AG04450 (cell line): ENCODE measurements at regions of chr21 and their contacts with region 1.

Region 1: GRCh38 chr21:29164325-29164942 is 34.0 kb downstream of the MAP3K7CL start:
- DNase-seq: no peak
- H3K4me3 ChIP-seq: no peak overlapping the region
- H3K27ac ChIP-seq: no peak overlapping the region
- H3K27me3 ChIP-seq: no peaks in the 10 kb centered on the region
- CTCF ChIP-seq: peak; percentile 85

Region 2: GRCh38 chr21:29145354-29145782 is 19.1 kb before region 1 on chr21:
- CTCF ChIA-PET with region 1: interaction called, 10 read pairs
- POLR2A ChIA-PET with region 1: no interaction called
- DNase-seq: peak; percentile 73
- H3K4me3 ChIP-seq: no peak overlapping the region
- H3K27ac ChIP-seq: peak overlapping the region; percentile 68
- H3K27me3 ChIP-seq: no peaks in the 10 kb centered on the region
- CTCF ChIP-seq: no peak

Region 3: GRCh38 chr21:29298348-29299045 is 134.1 kb after region 1 on chr21 and contains the start of gene BACH1:
- CTCF ChIA-PET with region 1: interaction called, 23 read pairs
- POLR2A ChIA-PET with region 1: interaction called, 4 read pairs
- DNase-seq: peak; percentile 84
- H3K4me3 ChIP-seq: peak within 1 kb of the TSS; percentile 97
- H3K27ac ChIP-seq: peak within 1 kb of the TSS; percentile 99
- H3K27me3 ChIP-seq: no peaks in the 10 kb centered on the region
- CTCF ChIP-seq: peak; percentile 24
- polyA plus RNA-seq, gene BACH1: 60.6 and 72.2 TPM in 2 replicates

Region 4: DNA sequence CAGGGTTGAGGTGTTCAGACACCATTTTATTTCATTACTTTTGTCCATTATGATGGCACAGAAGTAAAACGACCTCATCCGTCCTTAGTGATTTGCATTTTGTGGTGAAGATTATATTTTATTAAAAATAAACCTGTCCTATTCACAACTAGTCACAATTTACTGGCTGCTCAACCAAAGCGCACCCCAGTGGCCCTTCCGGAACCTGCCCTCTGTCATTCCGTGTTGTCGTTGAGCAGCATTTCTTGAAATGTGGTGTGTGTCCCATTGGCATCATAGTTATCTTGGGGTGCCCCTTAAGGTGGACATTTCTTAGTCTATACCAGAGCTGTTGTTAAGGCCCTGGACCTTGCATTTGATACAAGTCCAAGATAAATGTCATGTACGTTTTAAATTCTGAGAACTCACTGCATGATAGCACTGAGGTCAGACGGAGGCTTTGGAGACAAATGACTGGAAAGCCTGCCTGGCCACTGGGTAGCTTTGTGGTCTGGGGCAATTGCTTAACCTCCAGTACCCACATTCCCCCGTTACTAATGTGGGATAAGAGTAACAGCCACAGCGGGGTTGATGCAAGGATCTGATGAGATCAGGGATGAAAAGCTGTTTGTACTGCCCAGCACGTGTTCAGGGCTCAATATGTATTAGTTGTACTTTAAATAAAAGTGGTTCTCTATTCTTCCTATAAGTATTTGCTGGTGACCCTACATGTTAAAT is 170.4 kb after region 1 on chr21:
- CTCF ChIA-PET with region 1: interaction called, 15 read pairs
- POLR2A ChIA-PET with region 1: no interaction called
- DNase-seq: no peak
- H3K4me3 ChIP-seq: no peak overlapping the region
- H3K27ac ChIP-seq: peak overlapping the region; percentile 69
- H3K27me3 ChIP-seq: no peaks in the 10 kb centered on the region
- CTCF ChIP-seq: no peak

Region 5: GRCh38 chr21:29360799-29361765 is 196.6 kb after region 1 on chr21:
- CTCF ChIA-PET with region 1: interaction called, 16 read pairs
- POLR2A ChIA-PET with region 1: interaction called, 3 read pairs
- DNase-seq: no peak
- H3K4me3 ChIP-seq: no peak overlapping the region
- H3K27ac ChIP-seq: no peak overlapping the region
- H3K27me3 ChIP-seq: no peaks in the 10 kb centered on the region
- CTCF ChIP-seq: peak; percentile 15; the same call in 1 of the 2 replicates